H1 (cell line): ENCODE measurements at regions of chr5 and their contacts with region 1.

Region 1: DNA sequence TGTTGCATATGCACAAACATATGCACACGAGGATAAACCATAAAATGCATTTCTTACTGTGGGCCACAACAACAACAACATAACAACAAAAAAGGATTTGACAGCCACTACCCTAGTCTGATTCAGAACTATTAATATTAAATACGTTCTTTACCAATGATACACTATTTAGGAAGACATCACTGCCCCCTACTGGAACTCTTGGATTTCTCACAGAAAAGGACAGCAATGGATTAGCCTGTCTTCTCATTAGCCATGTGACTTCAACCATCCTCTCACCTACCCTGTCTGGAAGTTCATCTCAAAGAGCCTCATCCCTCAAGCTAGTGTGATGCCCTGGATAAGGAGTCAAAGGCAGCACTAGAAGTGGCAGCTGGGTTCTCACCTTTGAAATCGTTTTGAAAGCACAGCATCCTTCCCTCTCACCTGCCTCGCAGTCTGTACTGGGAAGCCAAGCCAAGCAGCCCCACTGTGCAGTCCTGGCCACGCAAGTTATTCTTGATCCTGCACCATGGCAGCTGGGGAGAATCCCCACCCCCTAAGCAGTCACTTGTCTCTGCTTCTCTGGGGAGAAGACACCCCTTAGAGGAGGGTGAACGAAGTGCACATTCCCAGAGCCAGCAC is 64.6 kb downstream of the SH3TC2 start:
- DNase-seq: no peak
- H3K4me3 ChIP-seq: no peak overlapping the region
- H3K27ac ChIP-seq: no peak overlapping the region
- H3K4me1 ChIP-seq: no peaks in the 10 kb centered on the region; a peak in 1 of 7 replicates
- H3K27me3 ChIP-seq: no peaks in the 10 kb centered on the region
- CTCF ChIP-seq: peak in 2 of 3 experiments; percentile 56 to 72; a peak in 2 of 4 replicates
- EP300 ChIP-seq: no peak
- POLR2A ChIP-seq: no peak
- RAD21 ChIP-seq: peak; percentile 70 to 74

Region 2: DNA sequence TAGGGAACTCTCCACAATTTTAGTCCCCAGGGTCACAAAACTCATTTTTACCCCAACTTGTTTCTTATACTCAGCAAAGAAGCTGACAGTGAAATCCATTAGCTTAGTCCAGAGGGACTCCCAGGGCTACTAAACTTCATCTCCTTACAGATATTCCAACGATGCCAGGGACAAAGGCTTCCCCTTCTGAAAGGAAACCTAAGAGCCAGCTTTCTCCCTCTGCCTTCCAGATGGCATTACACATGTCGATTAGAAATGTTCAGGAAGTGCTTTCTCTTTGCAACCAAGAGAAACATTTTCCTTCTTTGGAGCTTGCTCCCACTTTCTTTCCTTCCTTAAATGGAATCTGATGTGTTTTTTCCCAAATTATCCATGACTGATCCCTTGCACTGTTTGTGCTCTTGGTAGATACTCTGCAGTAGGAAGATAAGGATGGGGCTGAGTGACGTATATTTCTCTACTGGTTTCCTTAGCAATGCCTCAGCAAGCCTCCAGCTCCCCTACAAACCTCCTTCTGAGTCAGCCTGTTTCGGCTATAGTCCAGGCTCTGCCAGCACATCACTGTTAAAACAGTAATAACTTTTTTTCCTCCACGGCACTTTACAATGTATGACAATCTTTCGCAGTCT is 301.0 kb before region 1 on chr5:
- CTCF ChIA-PET with region 1: no interaction called
- POLR2A ChIA-PET with region 1: no interaction called
- DNase-seq: no peak
- H3K4me3 ChIP-seq: no peak overlapping the region
- H3K27ac ChIP-seq: no peak overlapping the region
- H3K4me1 ChIP-seq: no peaks in the 10 kb centered on the region
- H3K27me3 ChIP-seq: no peaks in the 10 kb centered on the region
- CTCF ChIP-seq: no peak
- EP300 ChIP-seq: no peak
- POLR2A ChIP-seq: no peak
- RAD21 ChIP-seq: no peak

Region 3: DNA sequence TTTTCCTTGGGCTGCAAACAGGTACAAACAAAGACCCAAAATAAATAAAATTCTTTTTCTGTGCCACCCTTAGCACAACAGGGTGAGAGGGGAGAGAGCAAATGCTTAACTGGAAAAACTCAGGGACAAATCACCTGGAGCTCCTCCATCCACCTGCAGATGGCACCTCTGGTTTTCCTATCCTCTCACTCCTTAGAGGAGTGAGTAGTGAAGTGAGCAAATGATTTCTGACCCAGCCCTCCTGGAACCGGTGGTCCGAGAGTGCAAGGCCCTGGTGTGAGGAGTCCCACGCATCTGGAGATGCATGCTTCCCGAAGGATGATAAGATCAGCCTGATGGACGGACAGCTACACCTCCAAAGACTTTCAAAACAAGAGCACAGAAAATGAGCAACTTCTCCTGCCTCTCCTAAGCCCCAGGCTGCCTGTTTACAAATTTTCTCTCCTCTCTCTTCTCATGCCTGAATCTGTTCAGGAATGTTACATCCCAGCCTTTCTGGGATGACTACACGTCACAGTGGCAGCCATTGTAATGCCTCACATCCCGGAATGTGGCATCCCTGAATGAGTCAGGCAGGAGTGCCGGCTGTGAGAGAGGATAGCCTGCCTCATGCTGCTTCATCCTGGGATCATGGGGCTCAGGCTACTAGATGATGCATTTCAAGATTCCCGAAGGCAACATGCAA is 85.4 kb before region 1 on chr5:
- CTCF ChIA-PET with region 1: interaction called, 12 read pairs
- POLR2A ChIA-PET with region 1: no interaction called
- DNase-seq: peak; percentile 53 to 68
- H3K4me3 ChIP-seq: no peak overlapping the region
- H3K27ac ChIP-seq: no peak overlapping the region; the same call in none of the 2 replicates
- H3K4me1 ChIP-seq: peaks cover 4 to 17% (median 9%) of the 10 kb centered on the region in 4 experiments
- H3K27me3 ChIP-seq: no peaks in the 10 kb centered on the region
- CTCF ChIP-seq: peak; percentile 29 to 56 (median 52)
- EP300 ChIP-seq: peak in 1 of 2 experiments; percentile 82; a peak in 1 of 3 replicates
- POLR2A ChIP-seq: no peak
- RAD21 ChIP-seq: peak; percentile 65 to 72

Region 4: GRCh38 chr5:148949841-148950470 is 48.3 kb before region 1 on chr5:
- CTCF ChIA-PET with region 1: interaction called, 11 read pairs
- POLR2A ChIA-PET with region 1: no interaction called
- DNase-seq: no peak
- H3K4me3 ChIP-seq: no peak overlapping the region
- H3K27ac ChIP-seq: no peak overlapping the region
- H3K4me1 ChIP-seq: peaks cover 0 to 12% (median 8%) of the 10 kb centered on the region in 4 experiments; a peak in 5 of 7 replicates
- H3K27me3 ChIP-seq: no peaks in the 10 kb centered on the region
- CTCF ChIP-seq: no peak
- EP300 ChIP-seq: no peak
- POLR2A ChIP-seq: no peak
- RAD21 ChIP-seq: no peak

Region 5: GRCh38 chr5:148972958-148973357 is 25.3 kb before region 1 on chr5:
- CTCF ChIA-PET with region 1: interaction called, 26 read pairs
- POLR2A ChIA-PET with region 1: no interaction called
- DNase-seq: no peak
- H3K4me3 ChIP-seq: no peak overlapping the region
- H3K27ac ChIP-seq: no peak overlapping the region
- H3K4me1 ChIP-seq: peaks cover 0 to 7% (median 3%) of the 10 kb centered on the region in 4 experiments; a peak in 5 of 7 replicates
- H3K27me3 ChIP-seq: no peaks in the 10 kb centered on the region
- CTCF ChIP-seq: no peak
- EP300 ChIP-seq: no peak
- POLR2A ChIP-seq: no peak
- RAD21 ChIP-seq: no peak

Region 6: DNA sequence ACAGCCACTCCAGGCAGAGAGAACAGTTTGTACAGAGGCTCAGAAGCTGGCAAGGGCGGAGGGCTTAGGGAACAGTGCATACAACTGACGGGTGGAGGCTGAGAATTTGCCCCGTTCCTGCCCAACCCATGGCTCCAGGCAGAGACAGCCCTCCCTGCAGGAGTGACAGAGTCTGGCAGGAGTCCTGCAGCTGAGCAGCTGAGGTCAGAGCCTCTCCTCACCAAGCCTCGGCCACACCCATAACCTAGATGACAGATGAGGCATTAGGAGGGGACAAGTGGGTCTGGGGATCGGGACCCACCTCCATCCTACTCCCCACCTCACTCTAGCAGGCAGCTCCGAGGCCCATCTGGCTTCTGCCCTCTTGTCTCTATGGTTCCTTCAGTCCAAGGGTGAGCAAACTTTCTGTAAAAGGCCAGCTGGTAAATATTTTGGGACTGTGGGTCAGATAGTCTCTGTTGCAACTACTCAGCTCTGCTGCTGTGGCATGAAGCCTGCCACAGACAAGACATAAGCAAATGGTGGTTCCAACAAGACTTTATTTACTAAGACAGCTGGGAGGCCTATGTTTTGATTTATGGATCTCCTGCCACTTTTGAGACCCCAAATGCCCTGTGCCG is 19.1 kb before region 1 on chr5:
- CTCF ChIA-PET with region 1: interaction called, 26 read pairs
- POLR2A ChIA-PET with region 1: no interaction called
- DNase-seq: no peak
- H3K4me3 ChIP-seq: no peak overlapping the region
- H3K27ac ChIP-seq: no peak overlapping the region
- H3K4me1 ChIP-seq: peaks cover 0 to 13% (median 5%) of the 10 kb centered on the region in 4 experiments; a peak in 4 of 7 replicates
- H3K27me3 ChIP-seq: no peaks in the 10 kb centered on the region
- CTCF ChIP-seq: no peak
- EP300 ChIP-seq: no peak
- POLR2A ChIP-seq: no peak
- RAD21 ChIP-seq: no peak

Region 7: GRCh38 chr5:148984333-148984732 is 14.0 kb before region 1 on chr5:
- CTCF ChIA-PET with region 1: interaction called, 60 read pairs
- POLR2A ChIA-PET with region 1: no interaction called
- DNase-seq: no peak
- H3K4me3 ChIP-seq: no peak overlapping the region
- H3K27ac ChIP-seq: no peak overlapping the region
- H3K4me1 ChIP-seq: peaks cover 0 to 7% (median 1%) of the 10 kb centered on the region in 4 experiments; a peak in 2 of 7 replicates
- H3K27me3 ChIP-seq: no peaks in the 10 kb centered on the region
- CTCF ChIP-seq: no peak
- EP300 ChIP-seq: no peak
- POLR2A ChIP-seq: no peak
- RAD21 ChIP-seq: no peak

Region 8: GRCh38 chr5:149284501-149284900 is 286.2 kb after region 1 on chr5:
- CTCF ChIA-PET with region 1: no interaction called
- POLR2A ChIA-PET with region 1: no interaction called
- DNase-seq: no peak
- H3K4me3 ChIP-seq: no peak overlapping the region
- H3K27ac ChIP-seq: no peak overlapping the region
- H3K4me1 ChIP-seq: no peaks in the 10 kb centered on the region
- H3K27me3 ChIP-seq: no peaks in the 10 kb centered on the region; a peak in 1 of 7 replicates
- CTCF ChIP-seq: no peak
- EP300 ChIP-seq: no peak
- POLR2A ChIP-seq: no peak
- RAD21 ChIP-seq: no peak